ENCODE measurements at regions of chr18 and their contacts with region 1.

Region 1: GRCh38 chr18:32470713-32471633 is at the start of gene GAREM1:
- DNase-seq: peak; percentile 96 to 97
- H3K4me3 ChIP-seq: peak within 1 kb of the TSS; percentile 51 to 83 (median 71)
- H3K27ac ChIP-seq: peak within 1 kb of the TSS; percentile 56 to 79 (median 74)
- H3K4me1 ChIP-seq: peaks cover 12 to 18% of the 10 kb centered on the region in 2 donors
- H3K27me3 ChIP-seq: no peaks in the 10 kb centered on the region
- CTCF ChIP-seq: peak; percentile 29 to 95 (median 60)
- POLR2A ChIP-seq: peak; percentile 72 to 99
- total RNA-seq, gene GAREM1: 4.6 to 6.8 (median 5.8) TPM

Region 2: GRCh38 chr18:32271672-32272208 is 199.2 kb before region 1 on chr18:
- intact Hi-C with region 1: loop called (anchors 5 kb)
- DNase-seq: peak; percentile 8 to 34
- H3K4me3 ChIP-seq: no peak overlapping the region
- H3K27ac ChIP-seq: no peak overlapping the region
- H3K4me1 ChIP-seq: no peaks in the 10 kb centered on the region
- H3K27me3 ChIP-seq: no peaks in the 10 kb centered on the region
- CTCF ChIP-seq: peak; percentile 53 to 88 (median 74)
- POLR2A ChIP-seq: no peak

Region 3: DNA sequence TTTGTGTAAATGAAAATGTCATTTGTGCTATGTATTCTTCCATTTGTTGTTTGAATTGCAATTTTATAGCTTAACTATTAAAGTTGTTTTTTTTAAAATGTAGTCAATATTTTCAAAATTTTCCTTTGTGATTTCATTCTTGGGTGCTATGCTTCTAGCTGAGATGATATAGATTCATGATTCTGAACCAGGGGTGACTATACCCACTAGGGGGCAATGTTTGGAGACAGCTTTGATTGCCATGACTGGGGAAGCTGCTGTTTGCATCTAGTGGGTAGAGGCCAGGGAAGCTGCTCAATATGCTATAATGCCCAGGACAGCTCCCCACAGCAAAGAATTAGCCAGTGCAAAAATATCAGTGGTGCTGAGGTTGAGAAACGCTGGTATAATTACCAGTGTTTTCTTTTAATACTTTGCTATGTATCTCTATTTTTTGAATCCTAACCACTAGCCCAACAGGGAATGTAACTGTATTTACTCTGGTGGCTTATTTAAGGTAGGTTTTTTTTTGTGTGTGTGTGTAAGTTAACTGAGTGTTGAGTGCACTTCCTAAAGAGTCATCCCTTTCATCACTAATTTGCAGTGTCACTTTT is 181.4 kb before region 1 on chr18:
- intact Hi-C with region 1: loop called (anchors 5 kb)
- DNase-seq: peak; percentile 25 to 26
- H3K4me3 ChIP-seq: no peak overlapping the region
- H3K27ac ChIP-seq: no peak overlapping the region
- H3K4me1 ChIP-seq: peaks cover 4 to 9% of the 10 kb centered on the region in 2 donors
- H3K27me3 ChIP-seq: no peaks in the 10 kb centered on the region
- CTCF ChIP-seq: peak; percentile 24 to 58 (median 33)
- POLR2A ChIP-seq: no peak